ENCODE measurements at regions of chr10 and their contacts with region 1.

Region 1: GRCh38 chr10:97072851-97073665 is 112.7 kb downstream of the SLIT1 start:
- DNase-seq: peak; percentile 48 to 67
- ATAC-seq: peak; percentile 83 to 85
- H3K4me3 ChIP-seq: no peak overlapping the region
- H3K27ac ChIP-seq: no peak overlapping the region
- H3K4me1 ChIP-seq: no peaks in the 10 kb centered on the region
- H3K27me3 ChIP-seq: peaks cover 0 to 3% (median 0%) of the 10 kb centered on the region in 3 donors
- CTCF ChIP-seq: peak; percentile 76 to 96 (median 87)
- POLR2A ChIP-seq: no peak

Region 2: GRCh38 chr10:97096261-97097083 is 23.4 kb after region 1 on chr10:
- in situ Hi-C with region 1: no loop called
- intact Hi-C with region 1: no loop called
- DNase-seq: peak in 1 of 2 donors; percentile 16
- ATAC-seq: peak; percentile 30 to 70
- H3K4me3 ChIP-seq: peak overlapping the region in 3 of 4 donors; percentile 15 to 38 (median 22)
- H3K27ac ChIP-seq: peak overlapping the region in 3 of 4 donors; percentile 15 to 41 (median 41)
- H3K4me1 ChIP-seq: peaks cover 15 to 18% of the 10 kb centered on the region in 2 donors
- H3K27me3 ChIP-seq: no peaks in the 10 kb centered on the region
- CTCF ChIP-seq: no peak
- POLR2A ChIP-seq: no peak

Region 3: GRCh38 chr10:97117372-97117771 is 44.3 kb after region 1 on chr10:
- in situ Hi-C with region 1: no loop called
- intact Hi-C with region 1: loop called (anchors 1 kb)
- DNase-seq: no peak
- ATAC-seq: peak; percentile 78 to 96
- H3K4me3 ChIP-seq: no peak overlapping the region
- H3K27ac ChIP-seq: no peak overlapping the region
- H3K4me1 ChIP-seq: peaks cover 8% of the 10 kb centered on the region in 2 donors
- H3K27me3 ChIP-seq: no peaks in the 10 kb centered on the region
- CTCF ChIP-seq: peak; percentile 35 to 72 (median 51)
- POLR2A ChIP-seq: no peak

Region 4: DNA sequence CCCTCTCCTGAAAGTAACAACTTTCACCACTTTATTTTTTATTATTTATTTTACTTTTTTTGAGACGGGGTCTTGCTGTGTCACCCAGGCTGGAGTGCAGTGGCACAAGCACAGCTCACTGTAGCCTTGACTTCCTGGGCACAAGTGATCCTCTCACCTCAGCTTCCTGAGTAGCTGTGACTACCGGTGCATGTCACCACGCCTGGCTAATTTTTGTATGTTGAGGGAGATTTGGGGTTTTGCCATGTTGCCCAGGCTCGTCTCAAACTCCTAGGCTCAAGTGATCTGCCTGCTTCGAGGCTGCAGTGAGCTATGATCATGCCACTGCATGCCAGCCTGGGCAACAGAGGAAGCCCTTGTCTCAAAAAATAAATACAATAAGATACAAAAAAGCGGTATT is 127.6 kb after region 1 on chr10:
- in situ Hi-C with region 1: loop called (anchors 5 to 10 kb)
- intact Hi-C with region 1: no loop called
- DNase-seq: no peak
- ATAC-seq: no peak
- H3K4me3 ChIP-seq: no peak overlapping the region
- H3K27ac ChIP-seq: no peak overlapping the region
- H3K4me1 ChIP-seq: no peaks in the 10 kb centered on the region
- H3K27me3 ChIP-seq: peaks cover 5 to 14% (median 5%) of the 10 kb centered on the region in 3 donors
- CTCF ChIP-seq: no peak
- POLR2A ChIP-seq: no peak

Region 5: GRCh38 chr10:97210543-97210961 is 137.5 kb after region 1 on chr10:
- in situ Hi-C with region 1: loop called (anchors 5 to 10 kb)
- intact Hi-C with region 1: loop called (anchors 1 kb)
- DNase-seq: peak; percentile 20 to 53
- ATAC-seq: peak; percentile 66 to 81
- H3K4me3 ChIP-seq: no peak overlapping the region
- H3K27ac ChIP-seq: no peak overlapping the region
- H3K4me1 ChIP-seq: no peaks in the 10 kb centered on the region
- H3K27me3 ChIP-seq: no peaks in the 10 kb centered on the region
- CTCF ChIP-seq: peak; percentile 81 to 95 (median 88)
- POLR2A ChIP-seq: no peak

Region 6: GRCh38 chr10:97349752-97350513 is 276.9 kb after region 1 on chr10:
- in situ Hi-C with region 1: no loop called
- intact Hi-C with region 1: no loop called
- DNase-seq: no peak
- ATAC-seq: no peak
- H3K4me3 ChIP-seq: no peak overlapping the region
- H3K27ac ChIP-seq: no peak overlapping the region
- H3K4me1 ChIP-seq: no peaks in the 10 kb centered on the region
- H3K27me3 ChIP-seq: no peaks in the 10 kb centered on the region
- CTCF ChIP-seq: no peak
- POLR2A ChIP-seq: no peak

Measured in gastrocnemius medialis (tissue), 4 donors.